Activated CD8-positive, alpha-beta T cell treated with anti-CD3 and anti-CD28 coated beads for 36 hours (primary cell): ENCODE measurements at regions of chr11 and their contacts with region 1.

Region 1: GRCh38 chr11:12963792-12964536 is 45.2 kb upstream of the RASSF10 start:
- DNase-seq: peak; percentile 70
- ATAC-seq: peak; percentile 72
- H3K4me3 Mint-ChIP-seq: no peak overlapping the region
- H3K27ac Mint-ChIP-seq: no peak overlapping the region
- H3K4me1 Mint-ChIP-seq: no peaks in the 10 kb centered on the region
- H3K27me3 Mint-ChIP-seq: peaks cover 12% of the 10 kb centered on the region
- CTCF ChIP-seq: peak; percentile 76

Region 2: GRCh38 chr11:12906501-12906900 is 57.5 kb before region 1 on chr11:
- CTCF ChIA-PET with region 1: no interaction called
- POLR2A ChIA-PET with region 1: no interaction called
- intact Hi-C with region 1: no loop called
- DNase-seq: no peak
- ATAC-seq: no peak
- H3K4me3 Mint-ChIP-seq: no peak overlapping the region
- H3K27ac Mint-ChIP-seq: no peak overlapping the region
- H3K4me1 Mint-ChIP-seq: no peaks in the 10 kb centered on the region
- H3K27me3 Mint-ChIP-seq: peaks cover 12% of the 10 kb centered on the region
- CTCF ChIP-seq: no peak

Region 3: GRCh38 chr11:12950681-12951080 is 13.3 kb before region 1 on chr11:
- CTCF ChIA-PET with region 1: interaction called, 12 read pairs
- POLR2A ChIA-PET with region 1: no interaction called
- intact Hi-C with region 1: no loop called
- DNase-seq: no peak
- ATAC-seq: no peak
- H3K4me3 Mint-ChIP-seq: no peak overlapping the region
- H3K27ac Mint-ChIP-seq: no peak overlapping the region
- H3K4me1 Mint-ChIP-seq: no peaks in the 10 kb centered on the region
- H3K27me3 Mint-ChIP-seq: peaks cover 24% of the 10 kb centered on the region
- CTCF ChIP-seq: no peak

Region 4: GRCh38 chr11:12979928-12980689 is 16.1 kb after region 1 on chr11:
- CTCF ChIA-PET with region 1: interaction called, 22 read pairs
- POLR2A ChIA-PET with region 1: no interaction called
- intact Hi-C with region 1: no loop called
- DNase-seq: no peak
- ATAC-seq: no peak
- H3K4me3 Mint-ChIP-seq: no peak overlapping the region
- H3K27ac Mint-ChIP-seq: no peak overlapping the region
- H3K4me1 Mint-ChIP-seq: no peaks in the 10 kb centered on the region
- H3K27me3 Mint-ChIP-seq: peaks cover 3% of the 10 kb centered on the region
- CTCF ChIP-seq: no peak

Region 5: GRCh38 chr11:13040969-13041561 is 77.1 kb after region 1 on chr11:
- CTCF ChIA-PET with region 1: no interaction called
- POLR2A ChIA-PET with region 1: no interaction called
- intact Hi-C with region 1: no loop called
- DNase-seq: no peak
- ATAC-seq: no peak
- H3K4me3 Mint-ChIP-seq: no peak overlapping the region
- H3K27ac Mint-ChIP-seq: no peak overlapping the region
- H3K4me1 Mint-ChIP-seq: no peaks in the 10 kb centered on the region
- H3K27me3 Mint-ChIP-seq: peaks cover 11% of the 10 kb centered on the region
- CTCF ChIP-seq: no peak

Region 6: DNA sequence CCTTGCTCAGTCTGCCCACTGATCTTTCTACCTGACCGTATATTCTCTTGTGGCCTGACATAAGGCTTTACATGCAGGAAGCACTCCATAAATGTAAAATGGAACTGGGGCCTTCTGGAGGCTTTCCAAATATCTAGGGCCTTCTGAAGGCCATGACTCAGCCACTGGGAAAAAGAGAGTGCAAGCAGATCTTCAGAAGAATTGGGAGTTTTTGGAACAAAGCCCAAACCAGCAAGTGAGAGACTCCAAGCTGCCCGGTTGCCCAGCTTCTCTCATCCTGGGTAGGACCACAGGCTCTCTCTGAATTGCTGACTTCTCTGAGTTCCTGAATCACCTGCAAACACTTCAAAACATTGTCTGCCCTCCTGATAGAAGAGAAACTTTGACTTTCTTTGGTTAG is 205.7 kb after region 1 on chr11:
- CTCF ChIA-PET with region 1: no interaction called
- POLR2A ChIA-PET with region 1: no interaction called
- intact Hi-C with region 1: loop called (anchors 10 kb)
- DNase-seq: no peak
- ATAC-seq: no peak
- H3K4me3 Mint-ChIP-seq: no peak overlapping the region
- H3K27ac Mint-ChIP-seq: no peak overlapping the region
- H3K4me1 Mint-ChIP-seq: no peaks in the 10 kb centered on the region
- H3K27me3 Mint-ChIP-seq: peaks cover 7% of the 10 kb centered on the region
- CTCF ChIP-seq: no peak